Heart left ventricle (tissue), 16 donors: ENCODE measurements at regions of chr12 and their contacts with region 1.

Region 1: DNA sequence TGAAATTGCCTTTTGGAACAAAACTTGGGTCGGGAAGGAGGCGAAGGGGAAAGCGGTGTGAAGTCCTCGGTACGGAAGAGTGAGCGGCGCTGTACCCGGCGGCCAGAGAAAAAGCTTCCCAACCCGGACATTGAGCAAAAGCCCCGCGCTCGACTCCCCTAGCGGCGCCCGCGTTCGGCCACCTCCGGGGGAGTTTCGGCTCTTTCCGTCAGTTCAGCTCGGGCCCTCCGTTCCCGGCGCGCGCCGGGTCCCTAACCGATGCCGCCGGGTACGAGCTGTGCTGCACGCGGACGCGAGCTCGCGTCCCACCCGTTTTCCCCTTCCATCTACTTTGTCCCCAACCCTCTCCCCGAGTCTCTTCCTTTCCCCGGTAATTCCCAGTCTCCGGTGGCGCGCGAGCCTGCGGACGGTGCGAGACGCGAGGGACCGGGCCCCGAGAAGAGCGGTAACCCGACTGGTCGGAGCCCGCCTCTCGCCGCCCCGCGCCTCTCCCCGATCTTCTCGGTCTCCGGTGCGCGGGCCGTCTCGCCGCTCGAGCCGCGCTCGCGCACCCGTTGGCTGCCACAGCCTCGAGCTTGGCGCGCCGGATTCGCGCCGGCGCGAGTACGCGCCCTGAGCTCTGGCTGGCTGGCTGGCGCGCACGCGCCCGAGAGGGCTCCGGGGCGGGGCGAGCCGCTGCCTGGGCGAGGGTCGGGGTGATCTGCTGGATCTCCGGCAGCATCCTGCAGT is 446 bp upstream of the SPATS2 start:
- DNase-seq: peak; percentile 88 to 95 (median 91)
- ATAC-seq: peak; percentile 84 to 95 (median 94)
- H3K4me3 ChIP-seq: peak overlapping the region; percentile 50 to 97 (median 88)
- H3K27ac ChIP-seq: peak overlapping the region; percentile 31 to 99 (median 96)
- H3K4me1 ChIP-seq: peaks cover 3 to 47% (median 25%) of the 10 kb centered on the region in 12 donors
- H3K27me3 ChIP-seq: no peaks in the 10 kb centered on the region
- CTCF ChIP-seq: peak in 8 of 12 donors; percentile 14 to 52 (median 40)
- POLR2A ChIP-seq: peak; percentile 11 to 64

Region 2: DNA sequence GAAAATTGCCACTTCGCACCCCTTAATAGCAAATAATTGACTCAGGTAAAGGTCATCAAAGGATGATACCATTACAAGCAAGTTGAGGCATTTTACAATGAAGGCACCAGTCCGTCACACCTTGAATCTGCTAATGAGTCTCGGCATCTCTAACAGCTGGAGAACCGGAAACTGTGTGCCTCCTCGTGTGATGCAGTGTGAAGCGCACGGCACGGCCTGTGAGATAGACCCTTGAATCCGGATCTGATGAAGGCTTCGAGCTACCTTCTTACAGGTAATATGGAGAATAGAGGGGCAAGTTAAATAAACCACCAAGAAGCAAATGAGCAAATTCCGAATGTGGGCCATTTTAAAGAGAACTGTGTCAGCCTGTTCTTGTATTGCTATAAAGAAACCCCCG is 158.1 kb before region 1 on chr12:
- intact Hi-C with region 1: no loop called
- DNase-seq: no peak
- ATAC-seq: no peak
- H3K4me3 ChIP-seq: no peak overlapping the region
- H3K27ac ChIP-seq: no peak overlapping the region
- H3K4me1 ChIP-seq: peaks cover 0 to 5% (median 0%) of the 10 kb centered on the region in 12 donors
- H3K27me3 ChIP-seq: no peaks in the 10 kb centered on the region
- CTCF ChIP-seq: no peak
- POLR2A ChIP-seq: no peak

Region 3: DNA sequence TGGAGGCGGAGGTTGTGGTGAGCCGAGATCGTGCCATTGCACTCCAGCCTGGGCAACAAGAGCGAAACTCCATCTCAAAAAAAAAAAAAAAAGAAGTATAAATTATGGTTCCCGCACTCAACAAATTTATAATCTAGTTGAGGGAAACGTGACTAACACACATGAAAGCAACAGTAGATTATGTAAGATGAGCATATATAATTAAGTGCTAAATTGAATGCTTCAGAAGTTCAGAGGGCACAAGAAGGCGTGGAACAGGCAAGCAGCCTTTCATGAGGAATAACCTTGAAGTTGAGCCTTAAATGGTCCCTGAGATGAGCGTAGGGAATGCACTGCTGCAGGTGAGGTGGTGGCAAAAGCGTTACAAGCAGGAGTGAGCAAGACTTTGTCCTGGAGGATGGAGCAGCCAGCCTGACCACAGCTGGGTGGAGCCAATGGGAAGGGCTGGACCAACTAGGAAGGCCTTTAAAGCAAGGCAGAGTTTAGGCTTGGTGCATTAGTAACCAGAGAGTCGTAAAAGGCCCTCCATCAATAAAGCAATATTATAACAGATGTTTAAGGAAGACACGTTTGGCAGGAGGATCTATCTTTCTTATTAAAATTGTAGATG is 147.3 kb before region 1 on chr12:
- intact Hi-C with region 1: no loop called
- DNase-seq: no peak
- ATAC-seq: no peak
- H3K4me3 ChIP-seq: no peak overlapping the region
- H3K27ac ChIP-seq: no peak overlapping the region
- H3K4me1 ChIP-seq: peaks cover 0 to 59% (median 16%) of the 10 kb centered on the region in 12 donors
- H3K27me3 ChIP-seq: no peaks in the 10 kb centered on the region
- CTCF ChIP-seq: no peak
- POLR2A ChIP-seq: no peak

Region 4: DNA sequence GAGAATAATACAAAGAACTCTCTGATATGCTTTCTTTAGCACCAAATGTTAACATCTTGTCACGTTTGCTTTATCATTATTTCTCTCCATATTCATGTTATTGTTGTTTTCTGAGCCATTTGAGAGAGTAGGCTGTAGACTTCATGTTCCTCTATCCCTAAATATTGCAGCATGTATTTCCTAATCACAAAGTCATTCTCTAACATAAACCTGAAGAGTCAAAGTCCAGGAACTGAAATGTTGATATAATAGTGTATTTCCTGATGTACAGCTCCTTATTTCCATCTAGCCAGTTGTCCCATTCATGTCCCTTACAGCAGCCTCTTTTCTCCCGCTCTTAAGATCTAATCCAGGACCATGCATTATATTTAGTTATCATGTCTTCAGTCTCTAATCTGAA is 73.2 kb after region 1 on chr12:
- intact Hi-C with region 1: loop called in 1 of 10 experiments (anchors 10 kb)
- DNase-seq: no peak
- ATAC-seq: no peak
- H3K4me3 ChIP-seq: no peak overlapping the region
- H3K27ac ChIP-seq: no peak overlapping the region
- H3K4me1 ChIP-seq: peaks cover 0 to 8% (median 0%) of the 10 kb centered on the region in 12 donors
- H3K27me3 ChIP-seq: no peaks in the 10 kb centered on the region
- CTCF ChIP-seq: no peak
- POLR2A ChIP-seq: no peak

Region 5: DNA sequence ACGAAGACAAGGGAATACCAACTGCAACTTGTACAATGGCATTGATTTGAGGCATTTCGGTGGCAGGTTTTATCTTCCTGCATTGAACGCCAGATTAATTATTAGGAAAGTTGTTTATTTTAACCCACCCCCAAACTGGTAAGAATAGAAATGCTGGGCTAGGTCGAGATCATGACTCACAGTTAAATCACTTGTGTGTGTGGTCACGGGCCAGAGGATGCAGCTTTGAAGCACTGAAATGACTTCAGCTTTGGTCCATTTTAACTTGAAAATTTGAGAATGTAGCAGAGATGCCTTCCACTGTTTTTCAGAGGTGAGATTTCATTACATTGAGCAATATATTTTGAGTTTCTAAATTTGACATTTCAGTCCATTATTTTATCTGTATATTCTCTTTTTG is 148.4 kb after region 1 on chr12:
- intact Hi-C with region 1: loop called in 1 of 10 experiments (anchors 2 kb)
- DNase-seq: no peak
- ATAC-seq: no peak
- H3K4me3 ChIP-seq: no peak overlapping the region
- H3K27ac ChIP-seq: no peak overlapping the region
- H3K4me1 ChIP-seq: peaks cover 0 to 3% (median 0%) of the 10 kb centered on the region in 12 donors
- H3K27me3 ChIP-seq: no peaks in the 10 kb centered on the region
- CTCF ChIP-seq: no peak
- POLR2A ChIP-seq: no peak